Activated T-helper 1 cell treated with anti-CD3 and anti-CD28 coated beads, Interleukin-12 subunit alpha, Interleukin-12 subunit beta, Interleukin-2, Interleukin-4 antibody, amounts not matched to agents 30 ng/mL and 10 ng/mL and 1 ng/mL, durations not matched to agents 14 hours and 24 hours and 36 hours (primary cell): ENCODE measurements at regions of chr6 and their contacts with region 1.

Region 1: DNA sequence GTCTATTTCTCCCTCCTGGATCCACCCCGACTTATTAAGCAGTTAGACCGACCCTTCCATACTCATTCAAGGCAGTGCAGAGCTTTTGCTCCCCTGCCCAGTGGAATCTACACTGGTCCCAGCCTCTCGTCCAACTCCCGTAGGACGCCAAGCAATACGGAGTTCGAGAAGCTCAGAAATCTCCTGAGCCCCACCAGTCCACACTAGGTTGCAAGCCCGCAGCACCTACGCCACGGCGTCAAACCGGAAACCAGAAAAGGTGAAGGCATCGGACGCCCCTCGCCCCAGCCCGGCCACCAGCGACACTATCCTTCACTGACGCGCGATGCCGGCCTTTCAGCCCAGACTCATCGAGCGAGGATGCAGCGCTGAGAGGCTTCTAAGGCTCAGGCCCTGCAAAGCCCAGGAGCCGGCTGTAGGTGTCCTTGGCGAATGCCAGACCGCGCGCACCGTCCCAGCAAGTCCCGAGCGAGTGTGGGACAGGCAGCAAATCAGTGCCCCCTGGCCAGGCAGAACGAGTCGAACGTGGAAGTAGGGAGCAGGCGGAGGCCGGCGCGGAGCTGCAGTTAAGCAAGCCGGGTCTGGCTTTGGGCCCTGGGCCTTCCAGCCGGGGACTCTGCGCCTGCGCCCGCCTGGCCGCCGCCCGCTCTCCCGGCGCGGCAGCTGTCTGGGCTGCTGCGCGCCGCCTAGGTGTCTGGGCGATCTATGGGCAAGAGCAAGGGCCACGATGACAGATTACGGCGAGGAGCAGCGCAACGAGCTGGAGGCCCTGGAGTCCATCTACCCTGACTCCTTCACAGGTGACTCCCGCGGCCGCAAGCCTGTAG is at the start of gene RWDD1:
- DNase-seq: peak; percentile 98
- H3K4me3 Mint-ChIP-seq: peak within 1 kb of the TSS; percentile 99
- H3K27ac Mint-ChIP-seq: peak within 1 kb of the TSS; percentile 97
- H3K4me1 Mint-ChIP-seq: peaks cover 54% of the 10 kb centered on the region
- H3K27me3 Mint-ChIP-seq: peaks cover 13% of the 10 kb centered on the region
- total RNA-seq, gene RWDD1: 41.4 and 41.5 TPM in 2 replicates

Region 2: DNA sequence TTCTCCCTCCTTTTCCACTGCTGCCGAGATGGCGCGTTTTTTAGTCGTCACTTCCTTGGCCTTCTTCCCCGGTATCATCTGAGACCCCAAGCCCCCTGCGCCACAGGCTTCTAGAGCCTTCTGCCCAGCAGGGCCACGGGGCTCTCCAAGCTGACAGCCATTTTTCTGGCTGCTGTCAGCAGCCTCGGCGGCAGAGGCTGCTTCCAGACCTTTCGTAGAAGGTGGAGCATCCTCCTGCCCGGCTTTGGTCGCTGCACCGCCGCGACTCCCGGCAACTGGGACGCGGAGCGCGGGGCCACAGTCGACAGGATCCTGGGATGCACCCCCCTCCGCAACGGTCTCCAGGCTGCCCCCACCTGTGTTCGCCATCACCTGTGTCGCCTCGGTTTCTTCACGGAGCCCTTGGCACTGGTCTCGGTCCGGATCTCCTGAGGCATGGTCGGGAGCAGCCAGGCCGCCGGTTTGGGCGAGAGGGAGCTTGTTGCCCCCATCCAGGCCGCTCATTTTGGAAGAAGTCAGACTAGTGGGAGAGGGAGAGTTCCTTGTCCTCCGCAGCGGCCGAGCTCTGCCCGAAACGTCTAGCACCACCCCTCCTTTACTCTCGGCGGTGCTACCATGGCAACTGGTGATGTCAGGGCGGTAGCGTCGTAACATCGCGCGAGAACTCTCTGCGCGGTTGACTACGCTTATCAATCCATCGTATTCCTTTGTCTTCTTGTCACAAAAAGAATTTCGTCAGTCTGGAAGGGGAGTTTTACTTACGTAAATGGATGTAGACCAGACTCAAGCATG is 317.4 kb before region 1 on chr6 and contains the start of gene TSPYL4:
- intact Hi-C with region 1: loop called (anchors 1 kb)
- DNase-seq: peak; percentile 88
- H3K4me3 Mint-ChIP-seq: no peak within 1 kb of the TSS
- H3K27ac Mint-ChIP-seq: no peak within 1 kb of the TSS
- H3K4me1 Mint-ChIP-seq: no peaks in the 10 kb centered on the region
- H3K27me3 Mint-ChIP-seq: no peaks in the 10 kb centered on the region
- total RNA-seq, gene TSPYL4: 20.4 and 21.4 TPM in 2 replicates

Region 3: GRCh38 chr6:116461932-116462885 is 108.9 kb before region 1 on chr6:
- intact Hi-C with region 1: loop called (anchors 2 kb)
- DNase-seq: peak; percentile 67
- H3K4me3 Mint-ChIP-seq: peak overlapping the region; percentile 87
- H3K27ac Mint-ChIP-seq: peak overlapping the region; percentile 87
- H3K4me1 Mint-ChIP-seq: peaks cover 89% of the 10 kb centered on the region
- H3K27me3 Mint-ChIP-seq: peaks cover 1% of the 10 kb centered on the region

Region 4: DNA sequence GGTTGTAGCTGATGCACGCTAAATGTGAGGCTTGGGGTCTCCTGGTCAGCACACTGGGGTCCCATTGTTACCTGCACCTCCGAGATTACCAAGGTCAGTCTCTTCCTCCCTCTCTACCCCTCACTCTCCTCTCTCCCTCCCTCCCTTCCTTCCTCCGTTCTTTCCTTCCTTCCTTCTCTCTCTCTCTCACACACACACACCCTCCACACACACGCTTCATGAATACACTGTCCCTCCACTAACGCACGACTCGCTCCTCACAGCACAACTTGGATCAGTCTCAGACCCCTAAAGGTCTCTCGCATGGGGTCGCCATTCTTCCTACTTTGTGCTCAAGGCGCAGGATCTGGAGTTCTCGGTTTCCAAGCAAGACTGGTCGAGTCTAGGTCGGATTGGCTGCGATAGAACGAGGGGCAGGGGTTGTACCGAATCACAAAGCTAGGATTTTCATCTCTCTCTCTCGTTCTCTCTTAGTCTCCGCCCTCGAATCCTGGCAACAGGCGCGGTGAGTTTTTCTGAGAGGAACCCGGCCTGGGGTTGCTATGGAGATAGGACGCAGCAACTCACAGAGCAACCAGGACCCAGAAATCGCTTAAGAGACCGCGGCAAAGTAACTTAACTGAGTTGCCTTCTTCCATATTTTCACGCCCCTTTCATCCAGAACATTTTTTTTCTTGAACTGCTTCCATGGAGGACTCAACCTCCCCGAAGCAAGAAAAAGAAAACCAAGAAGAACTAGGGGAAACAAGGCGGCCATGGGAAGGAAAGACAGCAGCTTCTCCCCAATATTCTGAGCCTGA is 45.1 kb after region 1 on chr6 and contains the start of gene RSPH4A:
- intact Hi-C with region 1: loop called (anchors 1 kb)
- DNase-seq: peak; percentile 62
- H3K4me3 Mint-ChIP-seq: peak within 1 kb of the TSS; percentile 80
- H3K27ac Mint-ChIP-seq: no peak within 1 kb of the TSS
- H3K4me1 Mint-ChIP-seq: peaks cover 17% of the 10 kb centered on the region
- H3K27me3 Mint-ChIP-seq: peaks cover 41% of the 10 kb centered on the region
- total RNA-seq, gene RSPH4A: 0.36 TPM in 1 of 2 replicates, not detected in the other

Region 5: DNA sequence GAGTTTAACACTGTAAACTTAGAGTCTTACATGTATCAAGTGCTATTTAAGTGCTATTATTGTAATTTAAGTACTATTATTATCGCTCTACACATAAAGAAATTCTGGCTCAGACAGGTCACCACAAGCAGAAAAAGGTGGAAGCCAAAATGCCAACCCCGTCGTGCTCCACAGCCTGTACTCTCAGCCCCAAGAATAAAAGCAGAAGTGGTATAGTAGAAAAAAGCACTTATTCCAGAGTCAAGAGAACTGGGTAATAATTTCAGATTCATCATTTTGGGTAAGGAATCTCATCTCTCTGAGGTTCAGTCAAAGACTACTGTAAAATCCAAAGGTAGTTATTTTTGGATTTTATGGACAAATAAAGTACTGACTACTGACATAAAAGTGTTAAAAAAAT is 96.6 kb after region 1 on chr6:
- intact Hi-C with region 1: loop called (anchors 1 kb)
- DNase-seq: no peak
- H3K4me3 Mint-ChIP-seq: peak overlapping the region; percentile 100
- H3K27ac Mint-ChIP-seq: peak overlapping the region; percentile 97
- H3K4me1 Mint-ChIP-seq: peaks cover 45% of the 10 kb centered on the region
- H3K27me3 Mint-ChIP-seq: peaks cover 6% of the 10 kb centered on the region

Region 6: DNA sequence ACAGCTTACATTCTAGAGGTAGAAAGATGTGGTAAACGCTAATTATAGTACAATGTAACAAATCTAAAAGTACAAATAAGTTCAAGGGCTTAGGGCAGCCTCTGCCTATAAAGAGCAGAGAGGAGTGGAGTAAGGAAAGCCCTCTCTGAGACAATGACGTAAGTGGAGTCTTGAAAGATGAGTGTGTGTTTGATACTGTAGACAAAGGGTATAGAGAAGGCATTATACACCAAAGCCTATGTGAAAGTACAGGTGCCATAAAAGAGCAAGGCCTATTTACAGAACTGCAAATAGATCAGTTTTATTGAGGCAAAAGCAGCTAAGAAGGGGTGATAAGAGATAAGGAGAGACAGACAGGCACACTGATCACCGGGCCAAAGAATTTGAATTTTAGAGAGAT is 1020.3 kb after region 1 on chr6:
- intact Hi-C with region 1: no loop called
- DNase-seq: no peak
- H3K4me3 Mint-ChIP-seq: no peak overlapping the region
- H3K27ac Mint-ChIP-seq: no peak overlapping the region
- H3K4me1 Mint-ChIP-seq: peaks cover 7% of the 10 kb centered on the region
- H3K27me3 Mint-ChIP-seq: no peaks in the 10 kb centered on the region

Region 7: GRCh38 chr6:117674991-117675657 is 1104.1 kb after region 1 on chr6 and contains the start of gene NUS1:
- intact Hi-C with region 1: loop called (anchors 5 kb)
- DNase-seq: peak; percentile 97
- H3K4me3 Mint-ChIP-seq: peak within 1 kb of the TSS; percentile 96
- H3K27ac Mint-ChIP-seq: peak within 1 kb of the TSS; percentile 87
- H3K4me1 Mint-ChIP-seq: peaks cover 49% of the 10 kb centered on the region
- H3K27me3 Mint-ChIP-seq: no peaks in the 10 kb centered on the region
- total RNA-seq, gene NUS1: 49.5 and 52.1 TPM in 2 replicates